Cardiac septum (tissue), 1 donor: ENCODE measurements at regions of chr1 and their contacts with region 1.

Region 1: GRCh38 chr1:210143465-210144062 is 89.0 kb upstream of the SERTAD4 start:
- DNase-seq: no peak

Region 2: GRCh38 chr1:210311726-210312493 is 168.3 kb after region 1 on chr1:
- intact Hi-C with region 1: loop called (anchors 2 kb)
- DNase-seq: no peak